ENCODE measurements at regions of chr16 and their contacts with region 1.

Region 1: DNA sequence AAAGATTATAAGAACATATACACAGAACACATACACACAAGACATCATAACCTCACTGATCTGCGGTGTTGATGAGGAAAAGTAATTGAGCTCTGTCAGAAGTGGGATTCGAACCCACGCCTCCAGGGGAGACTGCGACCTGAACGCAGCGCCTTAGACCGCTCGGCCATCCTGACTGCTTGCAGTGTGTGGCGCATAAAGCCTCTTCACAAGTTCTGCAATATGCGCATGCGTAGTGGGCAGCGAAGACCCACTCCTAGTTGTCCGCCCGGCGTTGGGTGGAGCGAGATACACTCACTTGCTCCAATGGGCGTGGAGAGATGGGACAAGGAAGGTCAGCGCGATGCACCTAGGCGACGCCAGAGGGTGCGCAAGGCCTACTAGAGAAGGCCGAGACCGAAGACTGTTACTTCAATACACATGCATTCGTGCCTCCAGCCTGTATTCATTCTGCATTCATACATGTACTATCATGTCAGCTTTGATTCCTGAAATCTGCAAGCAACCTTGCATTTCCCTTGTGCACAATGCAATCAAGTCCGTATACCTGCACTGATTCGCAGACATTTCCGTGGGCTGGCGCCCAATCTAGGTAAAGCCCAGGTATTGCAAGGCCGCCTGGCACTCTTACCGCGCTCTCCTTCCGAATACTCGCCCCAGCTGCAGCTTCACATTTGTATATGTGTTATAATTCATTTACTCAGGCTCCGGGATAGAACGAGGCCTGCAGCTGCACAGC is 16.1 kb upstream of the PLLP start:
- DNase-seq: peak; percentile 99
- ATAC-seq: peak; percentile 81
- H3K4me3 ChIP-seq: peak overlapping the region; percentile 58; the same call in 1 of the 2 replicates
- H3K27ac ChIP-seq: peak overlapping the region; percentile 77
- H3K4me1 ChIP-seq: peaks cover 34% of the 10 kb centered on the region
- H3K27me3 ChIP-seq: no peaks in the 10 kb centered on the region
- CTCF ChIP-seq: peak; percentile 95 to 99 (median 99); a peak in 5 of 6 replicates
- EP300 ChIP-seq: peak in 1 of 2 experiments; percentile 83; a peak in 1 of 4 replicates
- POLR2A ChIP-seq: no peak; the same call in 1 of the 2 replicates
- RAD21 ChIP-seq: peak; percentile 98

Region 2: DNA sequence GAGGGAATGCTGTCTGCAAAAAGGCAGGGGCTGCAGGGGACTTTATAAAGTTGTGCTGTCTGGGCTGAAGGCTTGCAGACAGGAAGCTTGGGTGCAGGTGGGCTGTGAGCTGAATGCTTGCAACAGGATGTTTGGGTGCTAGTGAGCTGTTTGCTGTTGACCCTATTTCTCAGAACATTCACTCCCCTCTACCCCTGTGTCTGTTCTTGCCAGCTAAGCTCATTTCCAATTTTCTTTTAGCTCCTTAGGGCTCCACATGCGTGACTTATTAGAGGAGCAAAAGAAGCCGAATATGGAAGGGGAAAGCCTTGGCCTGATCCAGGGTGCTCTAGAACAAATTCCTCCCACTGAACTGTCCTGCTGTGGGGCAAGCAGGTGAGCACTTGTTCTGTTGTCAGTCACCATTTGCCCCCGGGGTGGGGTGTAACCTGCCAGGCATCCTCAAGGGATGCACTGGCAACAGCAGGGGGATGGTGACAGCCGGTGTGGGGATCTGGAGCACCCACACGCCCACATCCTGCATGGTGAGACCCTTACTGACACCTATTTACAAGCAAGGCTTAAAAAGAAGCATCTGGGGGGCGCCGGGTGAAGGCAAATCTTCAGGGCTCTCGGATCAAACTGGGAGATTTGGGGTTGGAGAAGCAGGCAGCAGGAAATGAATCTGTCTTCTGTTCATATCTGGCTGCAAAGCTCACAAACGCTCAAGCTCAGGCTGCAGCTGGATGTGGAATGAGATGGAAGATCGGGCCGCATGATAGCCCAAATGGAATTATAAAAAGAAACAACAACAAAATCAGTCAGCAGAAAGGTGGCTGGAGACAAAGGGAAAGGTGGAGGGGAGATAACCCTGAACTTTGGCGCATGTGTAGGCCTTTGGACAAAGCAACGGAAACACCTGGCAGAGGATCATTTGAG is 591.8 kb before region 1 on chr16:
- CTCF ChIA-PET with region 1: no interaction called
- POLR2A ChIA-PET with region 1: no interaction called
- RAD21 ChIA-PET with region 1: no interaction called
- SMC1A ChIA-PET with region 1: no interaction called
- in situ Hi-C with region 1: no loop called
- intact Hi-C with region 1: no loop called
- DNase-seq: no peak
- ATAC-seq: peak; percentile 35; the same call in 1 of the 3 replicates
- H3K4me3 ChIP-seq: no peak overlapping the region
- H3K27ac ChIP-seq: no peak overlapping the region
- H3K4me1 ChIP-seq: no peaks in the 10 kb centered on the region
- H3K27me3 ChIP-seq: no peaks in the 10 kb centered on the region
- CTCF ChIP-seq: no peak
- EP300 ChIP-seq: no peak
- POLR2A ChIP-seq: no peak
- RAD21 ChIP-seq: no peak

Region 3: DNA sequence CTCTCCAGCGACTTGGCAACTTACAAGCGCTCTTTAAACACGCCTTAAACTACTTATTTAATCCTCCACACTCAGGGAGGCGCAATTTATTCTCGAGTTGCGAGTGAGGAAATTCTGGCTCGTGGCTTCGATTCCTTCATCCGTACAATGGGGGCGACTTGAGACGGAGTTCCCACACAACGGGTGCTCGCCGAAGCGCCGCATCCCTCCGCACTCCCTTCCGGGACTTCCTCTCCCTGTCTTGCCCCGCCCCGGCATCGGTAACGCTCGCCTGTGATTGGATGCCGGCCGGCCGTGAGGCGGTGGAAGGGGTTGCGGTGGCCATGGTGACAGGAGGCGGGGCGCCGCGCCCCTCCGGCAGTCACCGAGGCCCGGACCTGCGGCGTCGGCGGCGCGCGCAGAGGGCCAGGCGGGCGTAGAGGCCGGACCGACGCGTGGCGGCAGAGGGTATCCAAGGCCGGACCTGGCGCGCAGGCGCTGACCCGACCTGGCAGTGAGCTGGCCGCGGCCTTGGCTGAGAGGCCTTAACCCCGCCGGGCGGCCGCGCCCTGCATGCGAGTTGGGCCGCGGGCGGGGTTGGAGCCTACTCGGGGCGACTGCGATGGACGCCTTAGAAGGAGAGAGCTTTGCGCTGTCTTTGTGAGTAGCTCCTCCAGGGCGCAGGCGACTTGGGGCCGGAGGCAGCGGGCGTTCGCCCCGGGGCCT is 55.6 kb before region 1 on chr16 and contains the start of gene ARL2BP:
- CTCF ChIA-PET with region 1: interaction called, 19 read pairs
- POLR2A ChIA-PET with region 1: interaction called, 4 read pairs
- RAD21 ChIA-PET with region 1: interaction called, 19 read pairs
- SMC1A ChIA-PET with region 1: interaction called, 39 read pairs
- in situ Hi-C with region 1: no loop called
- intact Hi-C with region 1: loop called (anchors 1 kb)
- DNase-seq: peak; percentile 84
- ATAC-seq: peak; percentile 96
- H3K4me3 ChIP-seq: peak within 1 kb of the TSS; percentile 73
- H3K27ac ChIP-seq: peak within 1 kb of the TSS; percentile 75
- H3K4me1 ChIP-seq: peaks cover 21% of the 10 kb centered on the region
- H3K27me3 ChIP-seq: no peaks in the 10 kb centered on the region
- CTCF ChIP-seq: peak in 1 of 3 experiments; percentile 22; a peak in 1 of 6 replicates
- EP300 ChIP-seq: no peak
- POLR2A ChIP-seq: peak; percentile 95
- RAD21 ChIP-seq: no peak
- polyA plus RNA-seq, gene ARL2BP: 12.5 to 20.5 TPM

Region 4: GRCh38 chr16:57273359-57273758 is 27.2 kb before region 1 on chr16:
- CTCF ChIA-PET with region 1: no interaction called
- POLR2A ChIA-PET with region 1: no interaction called
- RAD21 ChIA-PET with region 1: no interaction called
- SMC1A ChIA-PET with region 1: no interaction called
- in situ Hi-C with region 1: no loop called
- intact Hi-C with region 1: no loop called
- DNase-seq: no peak
- ATAC-seq: no peak
- H3K4me3 ChIP-seq: no peak overlapping the region
- H3K27ac ChIP-seq: no peak overlapping the region
- H3K4me1 ChIP-seq: no peaks in the 10 kb centered on the region
- H3K27me3 ChIP-seq: no peaks in the 10 kb centered on the region
- CTCF ChIP-seq: no peak
- EP300 ChIP-seq: no peak
- POLR2A ChIP-seq: no peak
- RAD21 ChIP-seq: no peak

Region 5: GRCh38 chr16:57341441-57342303 is 41.1 kb after region 1 on chr16:
- CTCF ChIA-PET with region 1: interaction called, 63 read pairs
- POLR2A ChIA-PET with region 1: interaction called, 27 read pairs
- RAD21 ChIA-PET with region 1: interaction called, 62 read pairs
- SMC1A ChIA-PET with region 1: interaction called, 70 read pairs
- in situ Hi-C with region 1: no loop called
- intact Hi-C with region 1: loop called (anchors 1 kb)
- DNase-seq: no peak
- ATAC-seq: peak; percentile 43
- H3K4me3 ChIP-seq: no peak overlapping the region
- H3K27ac ChIP-seq: peak overlapping the region; percentile 38
- H3K4me1 ChIP-seq: peaks cover 44% of the 10 kb centered on the region
- H3K27me3 ChIP-seq: no peaks in the 10 kb centered on the region
- CTCF ChIP-seq: no peak
- EP300 ChIP-seq: no peak
- POLR2A ChIP-seq: no peak
- RAD21 ChIP-seq: 0 out of 2 replicates have a peak, but pooled peaks have one; percentile 1

Region 6: GRCh38 chr16:57367116-57367752 is 66.7 kb after region 1 on chr16:
- CTCF ChIA-PET with region 1: interaction called, 12 read pairs
- POLR2A ChIA-PET with region 1: interaction called, 4 read pairs
- RAD21 ChIA-PET with region 1: interaction called, 29 read pairs
- SMC1A ChIA-PET with region 1: interaction called, 55 read pairs
- in situ Hi-C with region 1: no loop called
- intact Hi-C with region 1: no loop called
- DNase-seq: no peak
- ATAC-seq: no peak
- H3K4me3 ChIP-seq: no peak overlapping the region
- H3K27ac ChIP-seq: no peak overlapping the region
- H3K4me1 ChIP-seq: no peaks in the 10 kb centered on the region
- H3K27me3 ChIP-seq: no peaks in the 10 kb centered on the region
- CTCF ChIP-seq: no peak
- EP300 ChIP-seq: no peak
- POLR2A ChIP-seq: no peak; the same call in 1 of the 2 replicates
- RAD21 ChIP-seq: no peak

Region 7: GRCh38 chr16:57386381-57386951 is 85.9 kb after region 1 on chr16:
- CTCF ChIA-PET with region 1: interaction called, 14 read pairs
- POLR2A ChIA-PET with region 1: interaction called, 3 read pairs
- RAD21 ChIA-PET with region 1: interaction called, 8 read pairs
- SMC1A ChIA-PET with region 1: interaction called, 22 read pairs
- in situ Hi-C with region 1: no loop called
- intact Hi-C with region 1: no loop called
- DNase-seq: no peak
- ATAC-seq: no peak
- H3K4me3 ChIP-seq: no peak overlapping the region
- H3K27ac ChIP-seq: no peak overlapping the region
- H3K4me1 ChIP-seq: peaks cover 51% of the 10 kb centered on the region
- H3K27me3 ChIP-seq: no peaks in the 10 kb centered on the region
- CTCF ChIP-seq: no peak
- EP300 ChIP-seq: no peak
- POLR2A ChIP-seq: no peak
- RAD21 ChIP-seq: no peak

Region 8: GRCh38 chr16:57462209-57462977 is 161.8 kb after region 1 on chr16 and contains the start of gene POLR2C:
- CTCF ChIA-PET with region 1: interaction called, 3 read pairs
- POLR2A ChIA-PET with region 1: interaction called, 3 read pairs
- RAD21 ChIA-PET with region 1: interaction called, 3 read pairs
- SMC1A ChIA-PET with region 1: interaction called, 3 read pairs
- in situ Hi-C with region 1: no loop called
- intact Hi-C with region 1: loop called (anchors 1 kb)
- DNase-seq: peak; percentile 37
- ATAC-seq: peak; percentile 98
- H3K4me3 ChIP-seq: peak within 1 kb of the TSS; percentile 98
- H3K27ac ChIP-seq: peak within 1 kb of the TSS; percentile 64
- H3K4me1 ChIP-seq: peaks cover 7% of the 10 kb centered on the region
- H3K27me3 ChIP-seq: no peaks in the 10 kb centered on the region
- CTCF ChIP-seq: peak; percentile 96 to 99 (median 96); a peak in 5 of 6 replicates
- EP300 ChIP-seq: no peak
- POLR2A ChIP-seq: peak; percentile 100
- RAD21 ChIP-seq: peak; percentile 36
- polyA plus RNA-seq, gene POLR2C: 26.9 to 40.2 TPM

Measured in GM12878 (cell line).